Common myeloid progenitor, CD34-positive (primary cell): ENCODE measurements at regions of chr15 and their contacts with region 1.

Region 1: DNA sequence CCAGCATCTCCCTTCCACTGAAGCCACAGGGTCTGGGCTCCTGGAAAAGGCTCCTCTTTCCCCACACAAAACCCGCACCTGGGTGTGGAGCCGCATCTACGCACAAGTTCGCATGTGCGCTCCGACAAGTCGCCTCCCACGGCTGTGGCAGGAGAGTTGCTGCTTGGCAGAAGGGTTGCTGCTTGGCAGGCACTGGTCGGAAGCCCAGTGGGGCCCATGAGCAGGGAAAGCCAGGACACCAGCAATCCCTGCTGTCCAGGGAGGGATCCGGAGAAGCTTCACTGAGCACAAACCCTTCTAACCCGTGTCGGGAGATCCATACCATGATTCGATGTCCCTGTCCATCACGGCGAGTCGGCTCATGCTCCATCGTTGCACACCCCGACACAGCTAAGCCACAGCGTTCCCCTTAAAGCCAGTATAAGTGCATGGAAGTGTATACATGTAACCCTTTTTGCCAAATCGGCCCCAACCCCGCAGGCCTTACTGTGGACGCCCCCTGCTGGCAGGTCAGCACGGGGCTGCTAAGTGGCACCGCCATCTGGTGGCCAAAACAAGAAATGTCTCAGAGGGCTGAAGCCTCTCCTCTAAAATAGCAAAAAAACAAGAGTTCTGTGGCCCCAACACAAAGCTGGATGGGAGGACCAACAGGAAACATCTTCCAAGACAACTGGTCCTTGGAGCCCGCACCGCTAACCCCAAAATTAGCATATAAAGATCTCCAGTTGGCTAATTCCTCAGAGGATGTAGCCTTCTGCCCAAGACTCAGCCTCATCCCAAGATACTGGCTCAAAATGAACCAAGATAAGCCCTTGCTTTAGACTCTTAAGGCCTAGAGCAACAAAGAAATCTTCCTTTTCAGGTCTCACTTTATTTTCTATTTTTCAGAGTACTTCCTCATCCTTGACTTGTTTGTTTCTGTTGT is 8.3 kb downstream of the ANKRD63 start:
- DNase-seq: peak; percentile 86 to 93 (median 91)
- H3K4me3 ChIP-seq: no peak overlapping the region
- H3K27ac ChIP-seq: no peak overlapping the region
- H3K4me1 ChIP-seq: peaks cover 0 to 42% (median 23%) of the 10 kb centered on the region in 4 experiments
- H3K27me3 ChIP-seq: no peaks in the 10 kb centered on the region

Region 2: GRCh38 chr15:40217159-40217824 is 57.3 kb before region 1 on chr15:
- CTCF ChIA-PET with region 1: interaction called, 310 read pairs
- POLR2A ChIA-PET with region 1: interaction called, 4 read pairs
- DNase-seq: peak; percentile 80 to 93 (median 87)
- H3K4me3 ChIP-seq: no peak overlapping the region
- H3K27ac ChIP-seq: no peak overlapping the region
- H3K4me1 ChIP-seq: no peaks in the 10 kb centered on the region
- H3K27me3 ChIP-seq: no peaks in the 10 kb centered on the region

Region 3: DNA sequence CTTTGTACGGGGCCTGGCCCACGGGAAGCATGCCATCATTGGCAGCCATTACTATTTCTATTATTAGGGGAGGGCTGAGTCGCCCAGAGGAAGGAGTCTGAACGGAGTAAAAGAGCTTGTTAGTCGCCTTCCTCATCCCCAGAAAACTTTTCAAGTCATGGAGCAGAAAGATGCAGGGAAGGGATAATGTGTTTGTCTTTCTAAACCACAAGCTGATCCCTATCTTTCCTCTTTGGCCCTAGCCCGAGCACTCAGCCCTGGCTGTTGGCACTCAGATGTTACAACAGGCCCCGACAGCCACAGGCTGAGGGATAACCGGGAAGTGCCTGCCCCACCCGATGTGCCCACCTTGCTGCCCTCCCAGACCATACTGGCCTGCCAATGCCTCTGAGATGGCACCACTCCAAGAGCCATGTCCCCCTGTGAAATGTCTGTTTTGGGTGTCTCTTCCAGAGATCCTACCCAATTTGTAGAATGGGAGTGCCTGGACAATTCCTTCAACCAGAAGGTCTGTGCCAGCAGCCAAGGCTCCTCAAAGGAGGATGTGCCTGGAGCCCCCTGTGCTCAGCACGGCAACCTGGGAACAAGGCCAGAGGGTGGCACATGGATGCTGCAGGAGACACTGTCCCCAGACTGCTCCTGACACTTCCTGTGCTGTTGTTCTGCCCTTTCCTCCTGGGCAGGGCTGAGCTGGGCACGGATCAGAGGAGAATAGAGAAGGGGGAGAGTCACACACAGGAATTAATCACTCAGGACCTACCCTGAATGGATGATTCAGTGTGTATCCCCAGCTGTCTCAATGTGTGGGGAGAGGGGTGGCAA is 24.9 kb before region 1 on chr15:
- CTCF ChIA-PET with region 1: interaction called, 50 read pairs
- POLR2A ChIA-PET with region 1: no interaction called
- DNase-seq: no peak
- H3K4me3 ChIP-seq: no peak overlapping the region
- H3K27ac ChIP-seq: no peak overlapping the region
- H3K4me1 ChIP-seq: peaks cover 0 to 23% (median 14%) of the 10 kb centered on the region in 4 experiments
- H3K27me3 ChIP-seq: peaks cover 0 to 39% (median 11%) of the 10 kb centered on the region in 5 experiments

Region 4: GRCh38 chr15:40290918-40291574 is 16.4 kb after region 1 on chr15:
- CTCF ChIA-PET with region 1: interaction called, 26 read pairs
- POLR2A ChIA-PET with region 1: no interaction called
- DNase-seq: no peak
- H3K4me3 ChIP-seq: no peak overlapping the region
- H3K27ac ChIP-seq: no peak overlapping the region
- H3K4me1 ChIP-seq: peaks cover 0 to 18% (median 0%) of the 10 kb centered on the region in 4 experiments
- H3K27me3 ChIP-seq: no peaks in the 10 kb centered on the region

Region 5: DNA sequence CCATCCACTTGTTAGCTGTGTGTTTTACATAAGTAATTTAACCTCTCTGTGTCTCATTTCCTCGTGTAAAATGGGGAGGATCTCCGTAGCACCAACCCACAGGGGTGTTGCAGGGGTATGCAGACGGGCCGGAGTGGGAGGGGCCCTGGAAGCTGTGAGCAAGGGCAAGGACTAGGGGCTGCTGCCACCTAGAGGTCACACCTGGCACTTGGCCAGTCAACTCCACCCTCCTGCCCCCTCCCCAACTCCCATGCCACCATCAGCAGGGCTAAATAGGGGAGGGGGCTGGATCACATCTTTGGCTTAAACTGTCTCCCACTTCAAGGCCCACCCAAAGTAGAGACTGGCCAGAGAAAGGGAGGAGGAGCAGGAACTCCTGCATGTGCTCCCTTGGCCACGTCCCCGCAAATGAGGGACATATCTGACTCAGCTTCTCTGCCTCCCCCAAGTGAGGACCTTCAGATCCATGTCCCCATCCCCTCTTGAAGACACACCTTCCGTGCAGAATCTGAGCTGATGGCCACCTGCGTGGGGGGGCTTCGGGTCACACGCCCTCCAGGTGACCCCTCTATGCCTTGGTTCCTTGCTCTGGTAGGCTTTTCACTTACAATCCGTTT is 63.5 kb after region 1 on chr15:
- CTCF ChIA-PET with region 1: interaction called, 236 read pairs
- POLR2A ChIA-PET with region 1: interaction called, 4 read pairs
- DNase-seq: peak; percentile 86 to 92 (median 92)
- H3K4me3 ChIP-seq: peak overlapping the region in 1 of 7 experiments; percentile 42
- H3K27ac ChIP-seq: no peak overlapping the region
- H3K4me1 ChIP-seq: peaks cover 5 to 71% (median 59%) of the 10 kb centered on the region in 4 experiments
- H3K27me3 ChIP-seq: no peaks in the 10 kb centered on the region

Region 6: DNA sequence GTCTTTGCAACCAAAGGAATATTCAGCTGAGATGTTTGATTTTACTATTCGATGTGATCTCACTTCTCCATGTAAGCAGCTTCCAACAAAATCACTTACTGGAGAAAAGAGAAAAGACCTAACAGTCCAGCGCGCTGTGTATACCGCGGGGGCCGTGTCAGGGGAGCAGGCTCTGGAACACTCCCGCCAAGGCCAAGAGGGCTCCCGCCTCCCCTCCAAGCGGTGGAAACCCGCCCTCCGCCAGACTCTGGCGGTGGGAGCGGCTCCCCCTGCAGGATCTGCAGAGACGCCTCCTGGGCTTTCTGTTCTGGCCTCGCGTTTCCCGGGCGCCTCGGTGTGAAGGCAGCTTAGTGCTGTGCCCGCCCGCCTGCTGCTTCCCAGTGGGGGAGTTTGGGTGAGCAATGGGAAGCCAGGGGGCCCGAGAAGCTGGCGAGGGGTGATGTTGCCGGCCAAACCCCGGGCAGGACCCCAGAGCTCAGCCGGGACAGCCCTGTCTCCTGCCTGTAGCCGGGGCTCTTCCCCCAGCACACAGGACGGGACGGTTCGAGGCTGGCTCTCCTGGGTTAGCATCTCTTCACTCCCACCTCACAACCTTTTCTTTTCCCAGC is 232.5 kb after region 1 on chr15:
- CTCF ChIA-PET with region 1: no interaction called
- POLR2A ChIA-PET with region 1: no interaction called
- DNase-seq: peak; percentile 65 to 71 (median 66)
- H3K4me3 ChIP-seq: peak overlapping the region in 5 of 7 experiments; percentile 37 to 65 (median 43)
- H3K27ac ChIP-seq: no peak overlapping the region
- H3K4me1 ChIP-seq: peaks cover 0 to 26% (median 21%) of the 10 kb centered on the region in 4 experiments
- H3K27me3 ChIP-seq: peaks cover 12 to 41% (median 19%) of the 10 kb centered on the region in 5 experiments